ENCODE measurements at regions of chrX and their contacts with region 1.

Region 1: GRCh38 chrX:68710870-68711576 is 63.6 kb downstream of the STARD8 start:
- DNase-seq: peak in 2 of 3 donors; percentile 36 to 41
- H3K4me3 ChIP-seq: no peak overlapping the region
- H3K27ac ChIP-seq: no peak overlapping the region
- H3K4me1 ChIP-seq: peaks cover 0 to 15% (median 9%) of the 10 kb centered on the region in 4 experiments
- H3K27me3 ChIP-seq: peaks cover 0 to 8% (median 0%) of the 10 kb centered on the region in 5 experiments

Region 2: DNA sequence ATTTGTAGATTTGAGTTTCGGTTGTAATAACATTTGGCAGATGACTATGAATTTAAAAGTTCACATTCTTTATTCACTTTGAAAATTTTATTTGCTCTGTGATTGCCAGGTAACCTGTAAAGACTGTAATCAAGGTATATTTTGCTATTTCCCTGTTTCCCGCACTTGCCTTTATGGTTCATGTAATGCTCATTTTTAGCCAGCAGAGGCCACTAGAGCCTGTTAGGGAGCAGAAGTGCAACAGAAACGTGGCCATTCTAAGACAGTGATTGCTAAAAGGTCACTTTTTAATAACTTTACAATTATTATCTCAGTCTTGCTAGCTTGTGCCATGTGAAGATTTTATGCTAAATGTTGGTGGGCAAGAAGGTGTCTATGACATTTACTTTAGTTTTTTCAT is 199.8 kb before region 1 on chrX:
- CTCF ChIA-PET with region 1: interaction called, 25 read pairs
- POLR2A ChIA-PET with region 1: no interaction called
- DNase-seq: peak in 2 of 3 donors; percentile 62 to 67
- H3K4me3 ChIP-seq: no peak overlapping the region
- H3K27ac ChIP-seq: no peak overlapping the region
- H3K4me1 ChIP-seq: no peaks in the 10 kb centered on the region
- H3K27me3 ChIP-seq: no peaks in the 10 kb centered on the region

Region 3: DNA sequence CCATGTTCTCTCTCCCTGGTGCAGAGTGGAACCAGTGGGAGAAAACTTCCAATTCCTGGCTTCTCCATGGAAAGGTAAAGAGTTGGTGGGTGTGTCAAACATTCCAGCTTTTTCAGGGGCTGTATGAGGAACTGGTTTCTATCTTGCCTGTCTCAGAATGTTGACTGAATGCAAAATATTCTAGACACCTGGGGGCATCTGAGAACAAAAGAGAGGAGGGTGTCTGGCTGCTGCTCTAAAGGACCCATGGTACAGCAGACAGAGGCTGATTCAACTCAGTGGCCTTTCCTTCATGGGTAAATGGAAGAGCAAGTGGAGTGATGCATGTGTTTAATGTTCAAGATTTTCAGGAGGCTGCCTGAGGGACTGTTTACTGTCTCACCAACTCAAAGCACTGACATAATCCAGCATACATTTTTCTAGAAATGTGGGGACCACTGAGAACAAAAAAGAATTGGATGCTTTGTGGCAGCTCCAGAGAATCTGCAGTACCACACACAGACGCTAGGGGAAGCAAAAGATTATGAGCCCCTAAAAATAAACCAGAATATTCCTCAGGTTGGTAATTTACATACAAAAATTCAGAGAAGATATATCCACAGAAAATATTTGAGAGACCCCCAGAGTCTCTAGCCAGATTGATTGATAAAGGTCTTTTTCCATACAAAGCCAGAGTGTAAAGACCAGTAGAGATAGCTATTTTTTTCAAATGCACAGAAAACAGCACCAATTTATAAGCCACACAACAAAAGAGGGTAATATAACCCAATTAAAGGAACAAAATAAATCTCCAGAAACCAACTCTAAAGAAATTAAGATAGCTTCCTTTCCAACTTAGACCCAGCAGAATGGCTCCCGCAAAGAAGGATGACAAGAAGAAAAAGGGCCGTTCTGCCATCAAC is 111.5 kb before region 1 on chrX:
- CTCF ChIA-PET with region 1: interaction called, 15 read pairs
- POLR2A ChIA-PET with region 1: no interaction called
- DNase-seq: peak in 2 of 3 donors; percentile 4 to 14
- H3K4me3 ChIP-seq: no peak overlapping the region
- H3K27ac ChIP-seq: no peak overlapping the region
- H3K4me1 ChIP-seq: no peaks in the 10 kb centered on the region
- H3K27me3 ChIP-seq: no peaks in the 10 kb centered on the region

Region 4: GRCh38 chrX:68665502-68665901 is 45.5 kb before region 1 on chrX:
- CTCF ChIA-PET with region 1: no interaction called
- POLR2A ChIA-PET with region 1: no interaction called
- DNase-seq: no peak
- H3K4me3 ChIP-seq: no peak overlapping the region
- H3K27ac ChIP-seq: no peak overlapping the region
- H3K4me1 ChIP-seq: no peaks in the 10 kb centered on the region
- H3K27me3 ChIP-seq: peaks cover 0 to 3% (median 0%) of the 10 kb centered on the region in 5 experiments

Region 5: GRCh38 chrX:68684291-68684918 is 26.6 kb before region 1 on chrX:
- CTCF ChIA-PET with region 1: interaction called, 12 read pairs
- POLR2A ChIA-PET with region 1: no interaction called
- DNase-seq: peak in 2 of 3 donors; percentile 48 to 60
- H3K4me3 ChIP-seq: peak overlapping the region in 2 of 7 experiments; percentile 5 to 28
- H3K27ac ChIP-seq: no peak overlapping the region
- H3K4me1 ChIP-seq: peaks cover 8 to 51% (median 25%) of the 10 kb centered on the region in 4 experiments
- H3K27me3 ChIP-seq: peaks cover 0 to 13% (median 0%) of the 10 kb centered on the region in 5 experiments

Region 6: GRCh38 chrX:68922042-68922441 is 211.0 kb after region 1 on chrX:
- CTCF ChIA-PET with region 1: no interaction called
- POLR2A ChIA-PET with region 1: no interaction called
- DNase-seq: peak; percentile 81 to 97 (median 96)
- H3K4me3 ChIP-seq: no peak overlapping the region
- H3K27ac ChIP-seq: no peak overlapping the region
- H3K4me1 ChIP-seq: peaks cover 0 to 36% (median 13%) of the 10 kb centered on the region in 4 experiments
- H3K27me3 ChIP-seq: no peaks in the 10 kb centered on the region